ENCODE measurements at regions of chr11 and their contacts with region 1.

Region 1: DNA sequence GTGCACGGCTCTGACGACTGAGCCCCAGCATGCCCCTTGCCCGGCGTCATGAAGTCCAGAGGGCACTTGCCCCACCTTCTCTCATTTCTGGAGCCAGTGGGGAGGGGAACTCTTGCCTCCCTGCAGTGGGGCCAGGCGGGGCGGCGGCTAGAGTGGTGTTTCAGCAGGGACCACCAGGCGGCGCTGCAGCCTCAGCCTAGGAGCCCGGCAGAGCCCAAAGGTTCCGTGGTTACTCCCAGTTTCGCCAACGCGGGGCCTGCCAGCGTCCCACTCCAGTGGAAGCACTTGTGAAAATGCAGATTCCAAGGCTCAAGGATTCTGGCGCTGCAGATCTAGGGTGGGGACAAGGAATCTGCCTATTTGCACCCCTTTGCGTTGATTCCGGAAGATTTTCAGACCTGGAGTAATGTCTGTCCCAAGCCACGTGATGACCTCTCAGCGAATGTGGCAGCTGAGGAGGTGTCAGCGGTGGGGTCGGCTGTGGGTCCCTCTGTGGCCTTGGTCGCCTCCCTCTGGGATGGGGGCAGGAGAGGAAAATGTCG is 55.7 kb downstream of the CD82 start:
- DNase-seq: peak; percentile 41
- ATAC-seq: peak; percentile 89
- H3K4me3 ChIP-seq: peak overlapping the region; percentile 16 to 27; a peak in 2 of 4 replicates
- H3K27ac ChIP-seq: no peak overlapping the region
- H3K4me1 ChIP-seq: peaks cover 0 to 11% of the 10 kb centered on the region in 2 experiments; a peak in 2 of 4 replicates
- H3K27me3 ChIP-seq: no peaks in the 10 kb centered on the region
- CTCF ChIP-seq: peak; percentile 93 to 98 (median 96)
- POLR2A ChIP-seq: no peak
- RAD21 ChIP-seq: peak; percentile 99

Region 2: DNA sequence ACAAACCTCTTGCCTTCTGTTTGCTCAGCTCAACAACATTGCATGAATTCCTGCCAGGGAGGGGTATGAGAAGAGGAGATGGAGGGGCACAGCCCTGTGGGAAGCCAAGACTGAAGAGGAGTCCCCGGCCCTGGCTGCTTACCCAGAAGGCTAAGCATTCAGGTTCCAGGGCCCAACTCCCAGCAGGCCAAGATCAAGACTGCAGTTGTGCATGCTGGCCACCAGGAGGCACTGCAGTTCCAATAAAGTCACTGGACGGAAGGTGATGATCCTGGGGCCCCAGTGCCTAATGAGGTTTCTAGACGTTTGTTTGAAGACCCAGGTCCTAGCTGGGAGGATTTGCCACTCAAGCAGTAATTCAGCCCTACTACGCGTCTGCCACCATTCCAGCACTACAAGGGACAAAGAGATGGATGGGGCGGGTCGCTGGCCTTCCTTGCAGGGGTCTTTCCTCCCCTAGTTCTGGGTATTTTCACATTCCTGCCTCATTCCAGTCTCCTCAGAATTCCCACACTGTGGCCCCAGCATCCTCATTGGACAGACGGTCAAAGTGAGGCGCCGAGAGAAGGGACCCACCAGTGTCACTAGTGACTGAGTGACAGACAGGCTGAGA is 334.8 kb before region 1 on chr11:
- CTCF ChIA-PET with region 1: interaction called, 7 read pairs
- POLR2A ChIA-PET with region 1: no interaction called
- RAD21 ChIA-PET with region 1: interaction called in 1 of 2 experiments, 3 read pairs
- intact Hi-C with region 1: loop called (anchors 2 kb)
- DNase-seq: peak; percentile 43
- ATAC-seq: peak; percentile 94
- H3K4me3 ChIP-seq: no peak overlapping the region
- H3K27ac ChIP-seq: no peak overlapping the region
- H3K4me1 ChIP-seq: no peaks in the 10 kb centered on the region; a peak in 1 of 4 replicates
- H3K27me3 ChIP-seq: no peaks in the 10 kb centered on the region
- CTCF ChIP-seq: peak; percentile 85 to 96 (median 95)
- POLR2A ChIP-seq: no peak
- RAD21 ChIP-seq: peak; percentile 90

Region 3: GRCh38 chr11:44565211-44565952 is 55.8 kb before region 1 on chr11 and contains the start of gene CD82:
- CTCF ChIA-PET with region 1: interaction called, 28 read pairs
- POLR2A ChIA-PET with region 1: no interaction called
- RAD21 ChIA-PET with region 1: interaction called in 1 of 2 experiments, 7 read pairs
- intact Hi-C with region 1: no loop called
- DNase-seq: peak; percentile 92
- ATAC-seq: peak; percentile 96
- H3K4me3 ChIP-seq: peak within 1 kb of the TSS; percentile 60 to 68
- H3K27ac ChIP-seq: peak within 1 kb of the TSS; percentile 83
- H3K4me1 ChIP-seq: peaks cover 21 to 45% of the 10 kb centered on the region in 2 experiments
- H3K27me3 ChIP-seq: no peaks in the 10 kb centered on the region
- CTCF ChIP-seq: 0 out of 6 replicates have a peak, but pooled peaks of 1 of the 3 experiments have one; percentile 14
- POLR2A ChIP-seq: no peak
- RAD21 ChIP-seq: no peak
- total RNA-seq, gene CD82: 16.7 TPM

Region 4: GRCh38 chr11:44702889-44703288 is 81.7 kb after region 1 on chr11:
- CTCF ChIA-PET with region 1: no interaction called
- POLR2A ChIA-PET with region 1: no interaction called
- RAD21 ChIA-PET with region 1: no interaction called
- intact Hi-C with region 1: no loop called
- DNase-seq: no peak
- ATAC-seq: no peak
- H3K4me3 ChIP-seq: no peak overlapping the region
- H3K27ac ChIP-seq: no peak overlapping the region
- H3K4me1 ChIP-seq: peaks cover 0 to 15% of the 10 kb centered on the region in 2 experiments; a peak in 1 of 4 replicates
- H3K27me3 ChIP-seq: no peaks in the 10 kb centered on the region
- CTCF ChIP-seq: no peak
- POLR2A ChIP-seq: no peak
- RAD21 ChIP-seq: no peak

Region 5: GRCh38 chr11:44893846-44894617 is 272.8 kb after region 1 on chr11:
- CTCF ChIA-PET with region 1: interaction called, 10 read pairs
- POLR2A ChIA-PET with region 1: no interaction called
- RAD21 ChIA-PET with region 1: no interaction called
- intact Hi-C with region 1: loop called (anchors 1 kb)
- DNase-seq: peak; percentile 40
- ATAC-seq: peak; percentile 99
- H3K4me3 ChIP-seq: no peak overlapping the region
- H3K27ac ChIP-seq: no peak overlapping the region
- H3K4me1 ChIP-seq: no peaks in the 10 kb centered on the region
- H3K27me3 ChIP-seq: no peaks in the 10 kb centered on the region
- CTCF ChIP-seq: peak; percentile 88 to 95 (median 95)
- POLR2A ChIP-seq: no peak
- RAD21 ChIP-seq: peak; percentile 95

Region 6: GRCh38 chr11:45102810-45103621 is 481.8 kb after region 1 on chr11:
- CTCF ChIA-PET with region 1: interaction called, 3 read pairs
- POLR2A ChIA-PET with region 1: no interaction called
- RAD21 ChIA-PET with region 1: no interaction called
- intact Hi-C with region 1: loop called (anchors 2 kb)
- DNase-seq: peak; percentile 45
- ATAC-seq: peak; percentile 68
- H3K4me3 ChIP-seq: no peak overlapping the region
- H3K27ac ChIP-seq: no peak overlapping the region
- H3K4me1 ChIP-seq: peaks cover 0 to 7% of the 10 kb centered on the region in 2 experiments; a peak in 2 of 4 replicates
- H3K27me3 ChIP-seq: peaks cover 20% of the 10 kb centered on the region
- CTCF ChIP-seq: peak; percentile 91 to 97 (median 96)
- POLR2A ChIP-seq: no peak
- RAD21 ChIP-seq: peak; percentile 97

Region 7: GRCh38 chr11:45580399-45580798 is 959.2 kb after region 1 on chr11:
- CTCF ChIA-PET with region 1: no interaction called
- POLR2A ChIA-PET with region 1: no interaction called
- RAD21 ChIA-PET with region 1: no interaction called
- intact Hi-C with region 1: no loop called
- DNase-seq: no peak
- ATAC-seq: no peak
- H3K4me3 ChIP-seq: no peak overlapping the region
- H3K27ac ChIP-seq: no peak overlapping the region
- H3K4me1 ChIP-seq: peaks cover 2 to 6% of the 10 kb centered on the region in 2 experiments; a peak in 3 of 4 replicates
- H3K27me3 ChIP-seq: peaks cover 61% of the 10 kb centered on the region
- CTCF ChIP-seq: no peak
- POLR2A ChIP-seq: no peak
- RAD21 ChIP-seq: no peak